Caco-2 (cell line): ENCODE measurements at regions of chr20 and their contacts with region 1.

Region 1: DNA sequence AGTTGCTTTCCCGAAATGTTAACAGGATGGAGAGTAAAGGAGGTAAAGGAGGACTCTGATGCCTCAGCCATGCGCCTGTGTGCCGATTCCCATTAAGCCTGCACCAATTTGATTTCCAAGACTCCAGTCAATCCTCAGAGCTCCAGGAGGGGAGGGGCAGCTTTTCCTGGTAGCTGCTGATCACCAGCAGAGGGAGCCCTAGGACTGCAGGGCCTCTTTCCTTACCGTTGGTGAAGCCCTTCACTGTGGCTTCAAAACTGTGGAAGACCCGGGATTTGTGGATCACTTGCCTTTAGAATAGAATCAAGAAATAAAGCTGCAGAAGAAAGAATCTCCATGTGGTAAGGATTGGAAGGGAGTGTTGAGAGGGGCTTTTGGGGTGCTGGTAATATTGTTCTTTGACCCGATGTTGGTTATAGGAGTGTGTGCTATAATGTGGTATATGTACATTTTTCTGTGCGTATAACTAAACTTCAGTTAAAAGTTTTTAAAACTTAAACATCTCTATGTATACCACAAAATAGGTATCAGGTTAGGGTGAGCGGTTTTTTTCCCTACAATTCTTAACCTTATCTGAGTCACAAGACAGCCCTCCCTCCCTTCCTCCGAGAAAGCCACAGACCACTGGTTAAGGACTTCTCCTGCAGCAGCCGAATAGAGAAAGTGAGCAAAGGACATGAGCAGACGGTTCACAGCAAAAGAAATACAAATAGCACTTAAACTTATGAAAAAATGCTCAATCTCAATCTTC is 6.9 kb upstream of the OSER1 start:
- DNase-seq: peak; percentile 92 to 95
- H3K4me3 ChIP-seq: no peak overlapping the region
- H3K4me3 Mint-ChIP-seq: no peak overlapping the region
- H3K27ac Mint-ChIP-seq: peak overlapping the region; percentile 8
- H3K4me1 ChIP-seq: peaks cover 49% of the 10 kb centered on the region
- H3K4me1 Mint-ChIP-seq: peaks cover 49% of the 10 kb centered on the region
- H3K27me3 ChIP-seq: no peaks in the 10 kb centered on the region
- H3K27me3 Mint-ChIP-seq: no peaks in the 10 kb centered on the region
- CTCF ChIP-seq: peak; percentile 100

Region 2: DNA sequence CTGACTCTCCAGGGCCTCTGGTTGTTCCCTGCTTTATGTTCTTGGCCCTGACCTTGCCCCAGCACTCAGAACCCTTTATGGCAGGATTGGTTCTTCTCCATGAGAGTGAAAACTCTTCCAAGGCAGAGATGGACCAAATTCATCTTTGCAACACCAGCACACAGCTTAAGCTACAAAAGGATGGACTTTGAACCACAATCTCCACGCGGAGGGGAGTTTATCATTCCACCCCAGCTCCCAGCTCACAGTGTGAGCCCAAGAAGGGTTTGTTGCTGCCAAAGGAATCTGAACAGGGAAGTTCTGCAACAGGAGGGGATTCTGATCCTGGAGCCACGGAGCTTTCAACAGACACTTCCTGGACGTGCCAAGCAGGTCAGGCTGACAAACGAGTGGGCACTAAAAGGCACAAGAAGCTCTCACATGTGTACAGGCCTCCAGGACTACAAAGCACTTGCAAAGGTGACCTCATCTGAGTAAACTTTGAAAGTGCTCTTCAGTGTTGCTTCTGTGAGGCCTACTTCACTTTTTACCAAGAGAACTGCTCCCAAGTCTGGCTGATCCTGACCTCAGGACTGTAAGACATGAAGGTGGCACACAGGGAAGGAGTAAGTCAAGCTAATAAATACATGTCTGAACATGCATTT is 84.6 kb after region 1 on chr20:
- CTCF ChIA-PET with region 1: interaction called, 28 read pairs
- POLR2A ChIA-PET with region 1: interaction called, 3 read pairs
- intact Hi-C with region 1: no loop called
- DNase-seq: peak; percentile 84 to 87
- H3K4me3 ChIP-seq: no peak overlapping the region
- H3K4me3 Mint-ChIP-seq: peak overlapping the region; percentile 59
- H3K27ac Mint-ChIP-seq: peak overlapping the region; percentile 95
- H3K4me1 ChIP-seq: peaks cover 23% of the 10 kb centered on the region
- H3K4me1 Mint-ChIP-seq: peaks cover 31% of the 10 kb centered on the region
- H3K27me3 ChIP-seq: no peaks in the 10 kb centered on the region
- H3K27me3 Mint-ChIP-seq: no peaks in the 10 kb centered on the region
- CTCF ChIP-seq: no peak

Region 3: DNA sequence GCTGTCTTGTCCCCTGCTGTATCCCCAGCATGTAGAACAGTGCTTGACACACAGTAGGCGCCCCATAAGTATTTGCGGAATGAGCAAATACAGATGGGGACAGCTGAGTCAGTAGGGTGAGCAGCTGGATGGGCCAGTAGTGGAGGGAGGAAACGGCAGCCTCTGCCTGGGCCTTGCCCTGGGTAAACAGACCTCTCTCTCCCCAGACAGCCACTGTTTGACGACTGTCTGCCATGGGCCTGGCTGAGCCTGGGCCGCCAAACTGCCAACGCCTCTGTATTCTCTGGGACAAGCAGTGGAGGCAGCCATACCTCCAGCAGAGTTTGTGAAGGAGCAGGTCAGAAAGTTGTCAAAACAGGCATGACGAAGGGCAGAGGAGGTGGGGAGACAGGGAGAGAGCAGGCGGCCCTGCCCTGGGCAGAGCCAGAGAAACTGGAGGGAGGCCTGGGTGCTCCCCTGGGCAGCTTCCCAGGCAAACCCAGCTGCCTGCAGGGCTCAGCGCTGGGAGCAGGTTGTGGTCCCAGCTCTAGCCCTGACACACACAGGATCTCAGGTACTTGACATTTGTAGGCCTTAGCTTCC is 153.2 kb after region 1 on chr20:
- CTCF ChIA-PET with region 1: interaction called, 11 read pairs
- POLR2A ChIA-PET with region 1: no interaction called
- intact Hi-C with region 1: no loop called
- DNase-seq: peak; percentile 98 to 99
- H3K4me3 ChIP-seq: no peak overlapping the region
- H3K4me3 Mint-ChIP-seq: peak overlapping the region; percentile 69
- H3K27ac Mint-ChIP-seq: peak overlapping the region; percentile 95
- H3K4me1 ChIP-seq: peaks cover 52% of the 10 kb centered on the region
- H3K4me1 Mint-ChIP-seq: peaks cover 47% of the 10 kb centered on the region
- H3K27me3 ChIP-seq: no peaks in the 10 kb centered on the region
- H3K27me3 Mint-ChIP-seq: no peaks in the 10 kb centered on the region
- CTCF ChIP-seq: peak in 1 of 2 experiments; percentile 13

Region 4: GRCh38 chr20:44409132-44409600 is 191.6 kb after region 1 on chr20:
- CTCF ChIA-PET with region 1: interaction called, 37 read pairs
- POLR2A ChIA-PET with region 1: no interaction called
- intact Hi-C with region 1: loop called (anchors 1 kb)
- DNase-seq: no peak
- H3K4me3 ChIP-seq: no peak overlapping the region
- H3K4me3 Mint-ChIP-seq: no peak overlapping the region
- H3K27ac Mint-ChIP-seq: peak overlapping the region; percentile 86
- H3K4me1 ChIP-seq: peaks cover 97% of the 10 kb centered on the region
- H3K4me1 Mint-ChIP-seq: peaks cover 74% of the 10 kb centered on the region
- H3K27me3 ChIP-seq: no peaks in the 10 kb centered on the region
- H3K27me3 Mint-ChIP-seq: no peaks in the 10 kb centered on the region
- CTCF ChIP-seq: no peak

Region 5: DNA sequence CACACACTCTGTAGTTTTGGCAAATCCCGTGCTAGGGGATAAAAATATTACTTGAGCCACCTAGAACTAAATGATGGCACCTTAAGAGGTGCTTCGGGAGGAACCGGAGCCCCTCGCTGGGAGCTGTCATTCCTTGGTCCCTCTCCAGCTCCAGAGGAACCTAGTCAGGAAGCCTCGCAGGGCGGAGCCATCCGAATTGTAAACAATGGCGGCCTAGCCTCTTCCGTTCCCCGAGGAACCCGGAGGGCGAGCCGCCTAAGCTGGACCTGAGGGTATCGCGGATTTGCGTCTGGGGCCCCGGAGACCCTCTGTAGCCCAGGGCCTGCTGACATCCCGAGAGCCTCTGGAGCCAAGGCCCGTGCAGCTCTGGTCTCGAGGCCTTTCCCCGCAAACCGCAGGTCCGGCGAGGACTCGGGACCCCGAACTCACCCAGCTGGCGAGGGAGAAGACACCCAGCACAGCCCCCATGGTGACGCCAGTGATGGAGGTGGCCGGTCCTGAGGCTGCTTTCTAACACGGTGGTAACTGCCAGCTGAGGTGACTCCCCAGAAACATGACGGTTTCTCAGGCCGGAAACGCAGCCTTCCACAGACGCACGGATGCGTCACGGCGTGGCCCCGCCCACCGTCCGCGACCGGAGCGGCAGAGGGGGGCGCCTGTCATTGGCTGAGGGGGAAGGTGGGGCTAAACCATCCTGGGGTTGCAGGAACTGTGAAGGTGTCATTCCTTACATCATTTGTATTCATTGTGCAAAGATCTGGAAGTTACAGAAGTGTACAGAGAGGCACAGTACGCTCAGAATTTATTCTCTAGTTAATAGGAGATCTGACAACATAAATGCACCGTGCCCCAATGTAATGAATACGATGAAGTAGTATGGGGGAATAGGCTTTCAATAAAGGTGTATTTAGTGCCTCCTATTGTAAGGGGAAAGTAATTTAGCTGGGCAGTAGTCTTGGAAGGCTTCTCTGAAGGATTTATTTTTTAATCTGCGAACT is 304.3 kb after region 1 on chr20 and contains the start of gene SERINC3:
- CTCF ChIA-PET with region 1: interaction called, 3 read pairs
- POLR2A ChIA-PET with region 1: no interaction called
- intact Hi-C with region 1: loop called (anchors 5 kb)
- DNase-seq: peak; percentile 98 to 100
- H3K4me3 ChIP-seq: peak within 1 kb of the TSS; percentile 77
- H3K4me3 Mint-ChIP-seq: peak within 1 kb of the TSS; percentile 68
- H3K27ac Mint-ChIP-seq: peak within 1 kb of the TSS; percentile 72
- H3K4me1 ChIP-seq: peaks cover 68% of the 10 kb centered on the region
- H3K4me1 Mint-ChIP-seq: peaks cover 68% of the 10 kb centered on the region
- H3K27me3 ChIP-seq: no peaks in the 10 kb centered on the region
- H3K27me3 Mint-ChIP-seq: no peaks in the 10 kb centered on the region
- CTCF ChIP-seq: peak in 1 of 2 experiments; percentile 22
- total RNA-seq, gene SERINC3: 179 and 185 TPM in 2 replicates